ENCODE measurements at regions of chr6 and their contacts with region 1.

Region 1: GRCh38 chr6:157323255-157323965 is at the start of gene TMEM242:
- DNase-seq: peak; percentile 91 to 93
- H3K4me3 ChIP-seq: peak within 1 kb of the TSS; percentile 63 to 79
- H3K27ac ChIP-seq: peak within 1 kb of the TSS; percentile 95
- H3K4me1 ChIP-seq: peaks cover 0 to 36% (median 16%) of the 10 kb centered on the region in 4 donors
- H3K27me3 ChIP-seq: no peaks in the 10 kb centered on the region
- CTCF ChIP-seq: peak; percentile 36

Region 2: GRCh38 chr6:156780102-156780641 is 543.2 kb before region 1 on chr6:
- intact Hi-C with region 1: no loop called
- DNase-seq: peak in 1 of 2 donors; percentile 64
- H3K4me3 ChIP-seq: peak overlapping the region; percentile 86 to 96
- H3K27ac ChIP-seq: peak overlapping the region; percentile 96 to 98
- H3K4me1 ChIP-seq: peaks cover 5 to 52% (median 27%) of the 10 kb centered on the region in 4 donors
- H3K27me3 ChIP-seq: no peaks in the 10 kb centered on the region
- CTCF ChIP-seq: no peak

Region 3: GRCh38 chr6:157379656-157380454 is 56.4 kb after region 1 on chr6:
- intact Hi-C with region 1: loop called (anchors 5 kb)
- DNase-seq: peak; percentile 94
- H3K4me3 ChIP-seq: peak overlapping the region; percentile 73 to 96
- H3K27ac ChIP-seq: peak overlapping the region; percentile 92 to 98
- H3K4me1 ChIP-seq: peaks cover 0 to 28% (median 18%) of the 10 kb centered on the region in 4 donors
- H3K27me3 ChIP-seq: no peaks in the 10 kb centered on the region
- CTCF ChIP-seq: no peak

Region 4: DNA sequence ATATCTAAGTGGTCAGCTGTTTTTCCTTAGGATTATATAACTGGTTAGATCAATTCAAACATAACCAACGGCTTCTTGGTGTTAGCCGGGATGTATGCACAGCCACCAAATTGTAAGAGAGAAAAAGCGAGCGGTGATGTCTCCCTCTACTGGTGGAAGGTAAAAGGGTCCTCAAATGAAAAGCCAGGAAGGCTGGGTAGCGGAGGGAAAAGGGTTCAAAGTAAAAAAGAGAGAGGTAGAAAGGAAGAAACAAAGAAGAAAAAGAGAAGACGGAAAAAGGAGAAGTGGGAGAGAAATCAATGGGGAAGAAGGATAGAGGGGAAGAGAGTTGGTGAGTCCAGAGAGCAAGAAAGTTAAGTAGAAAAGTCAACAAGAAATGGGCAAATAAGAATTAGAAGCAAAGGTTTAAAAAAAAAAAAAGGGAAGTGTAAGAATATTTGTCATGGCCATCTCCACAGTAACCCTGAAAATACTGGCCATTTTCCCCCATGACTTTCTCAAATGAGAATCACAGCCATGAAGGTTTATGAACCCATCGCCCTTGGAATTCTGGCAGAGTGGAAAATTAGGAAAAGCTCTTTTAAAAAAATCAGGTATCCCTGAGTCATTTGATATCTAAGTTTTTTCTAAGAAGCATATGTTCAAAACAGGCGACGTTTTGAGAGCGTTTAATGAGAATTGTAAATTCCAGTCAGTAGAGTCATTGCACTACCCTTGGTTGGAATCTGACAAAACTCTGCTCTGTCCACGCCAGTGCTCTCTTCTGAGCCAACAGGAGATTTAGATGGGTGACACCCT is 344.0 kb after region 1 on chr6:
- intact Hi-C with region 1: loop called (anchors 5 kb)
- DNase-seq: peak in 1 of 2 donors; percentile 60
- H3K4me3 ChIP-seq: no peak overlapping the region
- H3K27ac ChIP-seq: peak overlapping the region in 1 of 2 donors; percentile 16
- H3K4me1 ChIP-seq: peaks cover 5 to 34% (median 13%) of the 10 kb centered on the region in 4 donors
- H3K27me3 ChIP-seq: no peaks in the 10 kb centered on the region
- CTCF ChIP-seq: peak; percentile 72 to 76

Region 5: GRCh38 chr6:158086504-158087223 is 763.3 kb after region 1 on chr6:
- intact Hi-C with region 1: loop called (anchors 5 kb)
- DNase-seq: peak; percentile 74 to 95
- H3K4me3 ChIP-seq: peak overlapping the region; percentile 12 to 33
- H3K27ac ChIP-seq: peak overlapping the region; percentile 80 to 88
- H3K4me1 ChIP-seq: peaks cover 0 to 33% (median 12%) of the 10 kb centered on the region in 4 donors
- H3K27me3 ChIP-seq: no peaks in the 10 kb centered on the region
- CTCF ChIP-seq: no peak